SK-N-SH (cell line): ENCODE measurements at regions of chr6 and their contacts with region 1.

Region 1: GRCh38 chr6:136526196-136526930 is 23.9 kb downstream of the MAP7 start:
- DNase-seq: peak; percentile 76
- H3K4me3 ChIP-seq: peak overlapping the region in 1 of 2 experiments; percentile 31; a peak in 2 of 4 replicates
- H3K27ac ChIP-seq: peak overlapping the region in 1 of 2 experiments; percentile 94; a peak in 2 of 4 replicates
- H3K4me1 ChIP-seq: peaks cover 0 to 33% of the 10 kb centered on the region in 2 experiments; a peak in 2 of 4 replicates
- H3K27me3 ChIP-seq: no peaks in the 10 kb centered on the region
- CTCF ChIP-seq: peak; percentile 41
- EP300 ChIP-seq: no peak
- RAD21 ChIP-seq: peak; percentile 53

Region 2: DNA sequence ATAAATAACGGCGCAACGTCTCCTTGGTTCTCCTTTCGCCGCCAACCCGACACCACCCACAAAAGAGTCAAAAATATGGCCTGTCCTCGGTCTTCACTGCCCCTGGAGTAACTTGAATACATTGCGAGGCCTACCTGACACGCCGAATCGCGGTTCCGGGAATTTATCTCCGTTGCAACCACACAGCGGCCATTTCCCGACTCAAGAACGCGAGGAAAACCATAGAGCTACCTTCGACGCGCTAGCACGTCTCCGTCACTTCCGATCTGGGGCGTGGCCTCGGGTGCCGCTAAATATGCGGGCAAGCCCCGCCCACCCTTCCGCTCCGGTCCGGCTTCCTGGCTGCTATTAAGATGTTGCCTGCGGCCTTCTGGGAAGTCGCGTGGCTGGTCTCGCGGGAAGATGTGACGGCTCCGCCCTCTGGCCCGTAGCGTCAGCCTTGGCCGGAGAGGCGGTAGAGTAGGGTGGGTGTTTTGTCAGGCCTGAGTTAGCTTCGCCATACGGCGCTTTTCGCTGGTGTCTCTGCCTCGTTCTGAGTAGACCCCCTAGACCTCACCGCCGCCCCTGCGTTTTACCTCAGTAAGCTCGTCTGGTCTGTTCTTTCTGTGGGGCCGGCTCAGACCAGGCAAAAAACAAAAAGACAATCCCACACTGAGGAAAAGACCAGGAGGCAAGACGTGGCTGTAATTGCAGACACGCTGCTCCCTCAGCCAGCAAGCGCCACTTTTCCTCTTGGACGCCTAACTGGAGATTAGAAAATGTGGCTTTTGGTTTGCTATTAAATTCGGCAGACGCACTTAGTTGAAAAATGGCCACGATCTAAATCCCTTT is 236.6 kb before region 1 on chr6 and contains the start of gene BCLAF1:
- CTCF ChIA-PET with region 1: no interaction called
- POLR2A ChIA-PET with region 1: interaction called, 14 read pairs
- DNase-seq: peak; percentile 92
- H3K4me3 ChIP-seq: peak within 1 kb of the TSS; percentile 93 to 98
- H3K27ac ChIP-seq: peak within 1 kb of the TSS; percentile 100
- H3K4me1 ChIP-seq: peaks cover 5 to 20% of the 10 kb centered on the region in 2 experiments; a peak in 3 of 4 replicates
- H3K27me3 ChIP-seq: no peaks in the 10 kb centered on the region
- CTCF ChIP-seq: no peak
- EP300 ChIP-seq: no peak
- RAD21 ChIP-seq: no peak
- polyA plus RNA-seq, gene BCLAF1: 21.9 and 30.4 TPM in 2 replicates

Region 3: GRCh38 chr6:136491251-136491650 is 35.1 kb before region 1 on chr6:
- CTCF ChIA-PET with region 1: interaction called, 12 read pairs
- POLR2A ChIA-PET with region 1: interaction called, 4 read pairs
- DNase-seq: peak; percentile 31
- H3K4me3 ChIP-seq: no peak overlapping the region
- H3K27ac ChIP-seq: peak overlapping the region; percentile 20 to 99; a peak in 3 of 4 replicates
- H3K4me1 ChIP-seq: peaks cover 0 to 27% of the 10 kb centered on the region in 2 experiments; a peak in 2 of 4 replicates
- H3K27me3 ChIP-seq: no peaks in the 10 kb centered on the region
- CTCF ChIP-seq: no peak
- EP300 ChIP-seq: 0 out of 4 replicates have a peak, but pooled peaks of 1 of the 2 experiments have one; percentile 6
- RAD21 ChIP-seq: no peak

Region 4: DNA sequence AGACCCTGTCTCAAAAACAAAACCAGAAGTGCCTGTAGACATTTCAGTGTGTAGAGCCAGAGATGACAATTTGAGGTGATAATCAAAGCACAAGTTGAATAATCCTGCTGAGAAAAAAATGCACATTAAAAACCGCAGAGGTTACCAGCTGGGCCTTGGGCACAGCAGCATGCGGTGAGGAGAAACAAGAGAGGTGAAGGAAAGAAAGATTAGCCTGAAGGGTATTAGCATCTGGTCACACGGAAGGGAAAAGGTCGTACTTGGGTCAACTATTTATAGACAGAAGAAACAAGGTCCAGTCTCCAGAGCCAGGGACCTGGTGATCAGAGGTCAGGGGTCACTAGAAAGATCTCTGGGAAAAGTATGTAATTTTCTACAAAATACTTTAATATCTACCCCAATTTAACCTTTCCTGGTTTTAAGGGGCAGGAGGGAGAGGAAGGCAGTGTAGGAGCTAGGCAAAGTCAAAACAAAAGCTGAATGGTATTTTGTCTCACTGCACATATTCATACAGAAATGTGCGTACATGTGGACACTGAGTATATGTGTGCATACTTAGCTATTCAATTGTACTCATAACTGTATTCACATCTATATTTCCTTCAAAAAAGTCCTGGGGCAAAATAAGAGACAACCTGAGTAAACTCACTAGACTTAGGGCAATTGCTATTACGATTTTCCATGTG is 13.7 kb after region 1 on chr6:
- CTCF ChIA-PET with region 1: interaction called, 51 read pairs
- POLR2A ChIA-PET with region 1: interaction called, 3 read pairs
- DNase-seq: no peak
- H3K4me3 ChIP-seq: no peak overlapping the region
- H3K27ac ChIP-seq: no peak overlapping the region
- H3K4me1 ChIP-seq: peaks cover 0 to 4% of the 10 kb centered on the region in 2 experiments; a peak in 1 of 4 replicates
- H3K27me3 ChIP-seq: no peaks in the 10 kb centered on the region
- CTCF ChIP-seq: no peak
- EP300 ChIP-seq: no peak
- RAD21 ChIP-seq: no peak

Region 5: DNA sequence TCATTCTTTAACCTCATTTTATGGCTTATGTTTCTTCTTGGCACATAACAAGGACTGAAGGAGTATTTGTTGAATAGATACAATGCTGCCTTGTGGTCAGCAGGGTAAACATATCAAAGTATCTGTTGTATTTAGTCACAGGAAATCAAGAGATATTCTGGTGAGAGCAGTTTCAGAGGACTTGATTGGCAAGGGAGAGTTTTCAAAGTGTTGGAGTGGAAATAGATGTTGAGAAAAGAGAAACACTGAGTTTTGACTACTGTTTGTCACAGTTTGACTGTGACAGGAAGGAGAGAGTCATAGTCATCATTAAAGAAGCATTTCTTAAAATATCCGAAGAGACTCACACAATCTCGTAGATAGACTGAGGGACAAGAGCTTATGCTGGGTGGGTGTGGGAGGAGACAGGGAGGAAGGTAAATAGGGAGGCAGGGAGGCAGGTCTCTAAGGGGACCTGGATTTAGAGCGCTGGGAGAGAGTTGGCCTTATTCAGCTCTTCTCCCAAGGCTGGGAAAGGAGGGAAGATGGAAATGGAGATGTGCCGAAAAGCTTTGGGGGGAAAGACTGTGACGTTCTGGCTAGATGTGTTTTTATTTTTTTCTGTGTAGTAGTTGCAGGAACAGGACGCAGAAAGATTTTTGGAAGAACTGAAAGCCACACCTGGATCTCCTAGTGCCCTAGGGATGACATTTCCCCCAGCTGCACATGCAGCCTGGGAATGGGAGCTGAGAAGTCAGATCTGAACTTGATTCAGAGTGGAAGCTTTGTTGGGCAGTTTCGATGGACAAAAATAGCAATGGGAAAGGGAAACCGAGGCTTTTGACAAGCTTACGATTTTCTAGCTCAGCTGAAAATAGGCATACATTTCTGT is 757.8 kb after region 1 on chr6:
- CTCF ChIA-PET with region 1: no interaction called
- POLR2A ChIA-PET with region 1: no interaction called
- DNase-seq: no peak
- H3K4me3 ChIP-seq: no peak overlapping the region
- H3K27ac ChIP-seq: no peak overlapping the region
- H3K4me1 ChIP-seq: no peaks in the 10 kb centered on the region
- H3K27me3 ChIP-seq: no peaks in the 10 kb centered on the region
- CTCF ChIP-seq: no peak
- EP300 ChIP-seq: no peak
- RAD21 ChIP-seq: no peak